ENCODE measurements at regions of chr7 and their contacts with region 1.

Region 1: GRCh38 chr7:100889761-100890634 is 483 bp upstream of the UFSP1 start:
- DNase-seq: peak; percentile 90
- ATAC-seq: peak; percentile 82
- H3K4me3 ChIP-seq: peak overlapping the region; percentile 72
- H3K27ac ChIP-seq: peak overlapping the region; percentile 89
- H3K4me1 ChIP-seq: peaks cover 37% of the 10 kb centered on the region
- H3K27me3 ChIP-seq: peaks cover 1% of the 10 kb centered on the region; the same call in 1 of the 2 replicates
- CTCF ChIP-seq: no peak

Region 2: GRCh38 chr7:100874577-100875355 is 15.2 kb before region 1 on chr7 and contains the start of gene SRRT:
- CTCF ChIA-PET with region 1: no interaction called
- POLR2A ChIA-PET with region 1: interaction called, 39 read pairs
- intact Hi-C with region 1: no loop called
- DNase-seq: peak; percentile 97
- ATAC-seq: peak; percentile 97
- H3K4me3 ChIP-seq: peak within 1 kb of the TSS; percentile 78
- H3K27ac ChIP-seq: peak within 1 kb of the TSS; percentile 76
- H3K4me1 ChIP-seq: peaks cover 27% of the 10 kb centered on the region
- H3K27me3 ChIP-seq: no peaks in the 10 kb centered on the region
- CTCF ChIP-seq: no peak
- total RNA-seq, gene SRRT: 177 and 268 TPM in 2 replicates

Region 3: GRCh38 chr7:100965723-100966541 is 75.9 kb after region 1 on chr7:
- CTCF ChIA-PET with region 1: no interaction called
- POLR2A ChIA-PET with region 1: no interaction called
- intact Hi-C with region 1: loop called (anchors 5 kb)
- DNase-seq: peak; percentile 76
- ATAC-seq: peak; percentile 92
- H3K4me3 ChIP-seq: peak overlapping the region; percentile 15; the same call in 1 of the 2 replicates
- H3K27ac ChIP-seq: no peak overlapping the region
- H3K4me1 ChIP-seq: no peaks in the 10 kb centered on the region
- H3K27me3 ChIP-seq: peaks cover 31% of the 10 kb centered on the region
- CTCF ChIP-seq: peak; percentile 82

Region 4: GRCh38 chr7:101077303-101078089 is 187.5 kb after region 1 on chr7:
- CTCF ChIA-PET with region 1: interaction called, 13 read pairs
- POLR2A ChIA-PET with region 1: no interaction called
- intact Hi-C with region 1: no loop called
- DNase-seq: peak; percentile 90
- ATAC-seq: peak; percentile 99
- H3K4me3 ChIP-seq: no peak overlapping the region
- H3K27ac ChIP-seq: no peak overlapping the region
- H3K4me1 ChIP-seq: peaks cover 3% of the 10 kb centered on the region; the same call in 1 of the 2 replicates
- H3K27me3 ChIP-seq: no peaks in the 10 kb centered on the region
- CTCF ChIP-seq: peak; percentile 95

Region 5: DNA sequence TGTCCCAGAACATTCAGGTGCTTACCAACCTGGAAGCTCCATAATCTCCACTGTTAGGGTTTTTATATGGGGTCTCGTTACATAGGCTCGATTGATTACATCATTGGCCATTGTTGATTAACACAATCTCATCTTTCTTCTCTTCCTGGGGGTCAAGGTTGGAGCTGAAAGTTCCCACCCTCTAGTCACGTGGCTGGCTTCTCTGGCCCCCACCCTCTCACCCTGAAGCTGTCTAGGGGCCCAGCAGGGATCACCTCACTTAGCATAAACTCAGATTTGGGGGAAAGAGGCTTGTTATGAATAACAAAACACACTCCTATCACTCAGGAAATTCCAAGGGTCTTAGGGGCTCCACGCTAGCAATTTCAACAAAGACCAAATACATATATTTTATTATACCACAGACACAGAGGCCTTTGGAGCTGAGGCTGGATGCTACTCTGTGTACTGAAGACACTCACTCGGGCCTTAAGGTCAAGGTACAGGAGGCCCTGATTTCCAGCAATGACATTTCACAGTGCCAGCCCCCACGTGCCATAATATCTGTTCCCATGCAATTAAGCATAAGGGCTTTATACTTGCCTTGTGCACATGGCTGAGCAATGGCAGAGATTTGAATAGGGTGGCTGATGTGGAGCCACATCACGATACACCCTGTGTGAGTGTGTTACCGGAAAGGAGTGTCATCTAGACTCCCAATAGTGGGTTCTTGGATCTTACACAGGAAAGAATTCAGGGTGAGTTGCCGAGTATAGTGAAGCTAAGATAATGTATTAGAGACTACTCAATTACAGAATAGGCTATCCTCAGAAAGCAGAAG is 580.9 kb after region 1 on chr7:
- CTCF ChIA-PET with region 1: no interaction called
- POLR2A ChIA-PET with region 1: no interaction called
- intact Hi-C with region 1: no loop called
- DNase-seq: no peak
- ATAC-seq: no peak
- H3K4me3 ChIP-seq: no peak overlapping the region
- H3K27ac ChIP-seq: no peak overlapping the region
- H3K4me1 ChIP-seq: no peaks in the 10 kb centered on the region
- H3K27me3 ChIP-seq: no peaks in the 10 kb centered on the region
- CTCF ChIP-seq: no peak

Measured in PC-3 (cell line).